ENCODE measurements at regions of chr16 and their contacts with region 1.

Region 1: GRCh38 chr16:29790183-29790952 is at the start of gene KIF22:
- DNase-seq: peak; percentile 100
- H3K4me3 Mint-ChIP-seq: peak within 1 kb of the TSS; percentile 99
- H3K27ac Mint-ChIP-seq: peak within 1 kb of the TSS; percentile 95
- H3K4me1 Mint-ChIP-seq: peaks cover 37% of the 10 kb centered on the region
- H3K27me3 Mint-ChIP-seq: no peaks in the 10 kb centered on the region
- total RNA-seq, gene KIF22: 132 TPM in 2 replicates

Region 2: DNA sequence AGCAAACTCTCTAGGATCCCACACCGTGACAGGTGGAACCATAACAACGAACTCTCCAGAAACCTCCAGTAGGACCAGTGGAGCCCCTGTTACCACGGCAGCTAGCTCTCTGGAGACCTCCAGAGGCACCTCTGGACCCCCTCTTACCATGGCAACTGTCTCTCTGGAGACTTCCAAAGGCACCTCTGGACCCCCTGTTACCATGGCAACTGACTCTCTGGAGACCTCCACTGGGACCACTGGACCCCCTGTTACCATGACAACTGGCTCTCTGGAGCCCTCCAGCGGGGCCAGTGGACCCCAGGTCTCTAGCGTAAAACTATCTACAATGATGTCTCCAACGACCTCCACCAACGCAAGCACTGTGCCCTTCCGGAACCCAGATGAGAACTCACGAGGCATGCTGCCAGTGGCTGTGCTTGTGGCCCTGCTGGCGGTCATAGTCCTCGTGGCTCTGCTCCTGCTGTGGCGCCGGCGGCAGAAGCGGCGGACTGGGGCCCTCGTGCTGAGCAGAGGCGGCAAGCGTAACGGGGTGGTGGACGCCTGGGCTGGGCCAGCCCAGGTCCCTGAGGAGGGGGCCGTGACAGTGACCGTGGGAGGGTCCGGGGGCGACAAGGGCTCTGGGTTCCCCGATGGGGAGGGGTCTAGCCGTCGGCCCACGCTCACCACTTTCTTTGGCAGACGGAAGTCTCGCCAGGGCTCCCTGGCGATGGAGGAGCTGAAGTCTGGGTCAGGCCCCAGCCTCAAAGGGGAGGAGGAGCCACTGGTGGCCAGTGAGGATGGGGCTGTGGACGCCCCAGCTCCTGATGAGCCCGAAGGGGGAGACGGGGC is 126.1 kb before region 1 on chr16:
- intact Hi-C with region 1: no loop called
- DNase-seq: peak; percentile 81
- H3K4me3 Mint-ChIP-seq: peak overlapping the region; percentile 97
- H3K27ac Mint-ChIP-seq: peak overlapping the region; percentile 94
- H3K4me1 Mint-ChIP-seq: peaks cover 51% of the 10 kb centered on the region
- H3K27me3 Mint-ChIP-seq: no peaks in the 10 kb centered on the region

Region 3: DNA sequence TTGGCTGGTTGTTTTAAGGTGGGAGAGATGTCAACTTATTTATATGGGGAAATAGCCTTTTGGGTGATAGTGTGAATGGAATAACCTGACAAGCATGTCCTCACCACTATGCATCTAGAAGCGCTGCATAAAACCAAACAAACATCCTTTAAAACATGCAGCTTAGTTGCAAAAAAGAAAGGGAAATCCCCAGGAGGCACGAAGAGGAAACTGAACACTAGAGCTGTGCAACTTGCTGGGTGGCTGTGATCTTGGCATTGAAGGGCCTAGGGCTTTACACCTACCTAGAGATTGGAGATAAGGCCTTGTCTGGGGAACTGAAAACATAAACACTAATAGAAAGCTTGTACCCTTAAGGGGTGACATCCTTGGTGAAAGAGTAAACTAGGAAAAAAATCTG is 51.9 kb before region 1 on chr16:
- intact Hi-C with region 1: loop called (anchors 2 kb)
- DNase-seq: peak; percentile 91
- H3K4me3 Mint-ChIP-seq: peak overlapping the region; percentile 42
- H3K27ac Mint-ChIP-seq: peak overlapping the region; percentile 80
- H3K4me1 Mint-ChIP-seq: peaks cover 57% of the 10 kb centered on the region
- H3K27me3 Mint-ChIP-seq: peaks cover 4% of the 10 kb centered on the region

Region 4: DNA sequence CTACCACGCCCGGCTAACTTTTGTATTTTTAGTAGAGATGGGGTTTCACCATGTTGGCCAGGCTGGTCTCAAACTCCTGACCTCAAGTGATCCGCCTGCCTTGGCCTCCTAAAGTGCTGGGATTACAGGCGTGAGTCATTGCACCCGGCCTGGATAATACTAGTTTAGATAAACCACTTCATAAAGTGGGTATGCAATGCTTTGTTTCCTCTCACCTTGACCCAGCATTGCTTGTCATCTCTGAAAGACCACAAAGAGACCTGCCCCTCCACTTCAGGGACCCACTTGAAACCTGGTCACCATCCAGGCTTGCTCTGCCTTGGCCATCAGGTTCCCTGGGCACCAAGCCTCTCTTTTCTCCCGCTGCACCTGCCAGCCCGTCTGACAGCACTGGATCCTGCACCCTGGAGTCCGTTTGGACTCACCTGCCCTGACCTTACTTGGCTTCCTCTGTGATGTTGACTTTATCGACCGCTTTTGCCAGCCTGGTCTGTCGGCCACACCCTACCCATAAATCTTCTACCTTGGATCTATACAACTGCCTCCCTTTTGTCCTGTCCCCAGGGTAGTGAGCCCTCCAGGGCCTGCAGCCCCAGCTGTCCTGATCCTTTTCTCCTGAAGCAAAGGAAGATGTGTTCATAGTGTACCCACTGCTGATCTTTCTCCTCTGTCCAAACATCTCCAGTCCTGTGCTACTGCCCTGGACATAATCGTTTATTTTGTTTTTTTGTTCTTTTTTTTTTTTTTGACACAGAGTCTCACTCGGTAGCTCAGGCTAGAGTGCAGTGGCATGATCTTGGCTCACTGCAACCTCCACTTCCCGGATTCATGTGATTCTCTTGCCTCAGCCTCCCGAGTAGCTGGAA is 25.0 kb before region 1 on chr16:
- intact Hi-C with region 1: no loop called
- DNase-seq: no peak
- H3K4me3 Mint-ChIP-seq: no peak overlapping the region
- H3K27ac Mint-ChIP-seq: no peak overlapping the region
- H3K4me1 Mint-ChIP-seq: peaks cover 5% of the 10 kb centered on the region
- H3K27me3 Mint-ChIP-seq: peaks cover 6% of the 10 kb centered on the region

Region 5: GRCh38 chr16:29805378-29806098 is 15.2 kb after region 1 on chr16:
- intact Hi-C with region 1: loop called (anchors 1 kb)
- DNase-seq: peak; percentile 99
- H3K4me3 Mint-ChIP-seq: peak overlapping the region; percentile 96
- H3K27ac Mint-ChIP-seq: peak overlapping the region; percentile 99
- H3K4me1 Mint-ChIP-seq: peaks cover 42% of the 10 kb centered on the region
- H3K27me3 Mint-ChIP-seq: no peaks in the 10 kb centered on the region

Region 6: DNA sequence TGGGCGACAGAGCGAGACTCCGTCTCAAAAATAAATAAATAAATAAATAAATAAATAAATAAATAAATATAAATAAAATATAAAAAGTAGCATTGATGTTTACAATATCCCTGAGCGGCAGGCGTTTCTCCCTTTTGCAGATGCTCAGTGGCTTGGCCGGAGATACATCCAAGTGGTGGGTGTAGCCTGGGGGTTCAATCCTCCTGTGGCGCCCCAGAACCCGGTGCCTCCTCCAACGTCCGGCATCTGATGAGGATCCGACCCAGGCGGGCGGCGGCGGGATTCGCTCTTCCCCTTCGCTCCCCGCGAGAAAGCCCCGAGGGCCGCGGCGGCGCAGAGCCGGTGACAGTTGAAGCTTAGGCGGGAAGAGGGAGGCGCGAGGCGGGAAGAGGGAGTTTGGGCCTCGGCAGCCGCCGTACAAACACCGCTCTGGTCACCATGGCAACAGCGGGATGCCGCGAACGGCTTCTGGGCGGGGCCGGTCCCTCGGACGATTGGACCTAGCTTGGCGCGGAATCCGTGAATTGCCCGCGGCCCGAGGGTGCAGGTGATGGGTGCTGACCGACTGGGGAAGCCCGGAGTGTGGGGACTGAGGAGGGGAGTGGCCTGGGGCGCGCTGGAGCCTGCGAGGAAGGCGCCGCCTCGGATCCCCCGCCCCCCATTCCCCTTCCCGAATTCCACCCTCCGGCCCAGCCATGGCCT is 262.5 kb after region 1 on chr16:
- intact Hi-C with region 1: no loop called
- DNase-seq: peak; percentile 98
- H3K4me3 Mint-ChIP-seq: peak overlapping the region; percentile 87
- H3K27ac Mint-ChIP-seq: peak overlapping the region; percentile 81
- H3K4me1 Mint-ChIP-seq: peaks cover 31% of the 10 kb centered on the region
- H3K27me3 Mint-ChIP-seq: no peaks in the 10 kb centered on the region